HCT116 (cell line): ENCODE measurements at regions of chr5 and their contacts with region 1.

Region 1: DNA sequence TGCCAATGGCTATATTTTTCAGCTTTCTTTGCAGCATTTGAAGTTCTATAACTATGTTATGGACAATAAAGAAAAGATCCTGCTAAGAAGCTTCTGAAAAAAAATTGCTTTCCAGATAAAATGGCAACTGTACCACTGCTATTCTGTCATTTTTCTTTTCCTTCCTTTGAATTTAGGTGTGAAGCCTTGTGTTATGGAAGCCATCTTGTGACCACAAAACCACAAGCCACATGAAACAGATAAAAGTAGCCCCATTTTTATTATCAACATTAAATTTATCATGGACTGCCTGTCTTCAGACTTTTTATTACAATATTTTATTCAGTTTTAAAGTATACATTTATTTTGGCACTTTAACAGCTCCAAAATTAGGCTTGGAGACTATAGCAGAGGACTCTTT is 289.9 kb upstream of the ACTBL2 start:
- DNase-seq: no peak
- ATAC-seq: no peak
- H3K4me3 ChIP-seq: no peak overlapping the region
- H3K27ac ChIP-seq: no peak overlapping the region
- H3K4me1 ChIP-seq: no peaks in the 10 kb centered on the region
- H3K27me3 ChIP-seq: no peaks in the 10 kb centered on the region
- CTCF ChIP-seq: no peak
- POLR2A ChIP-seq: no peak
- RAD21 ChIP-seq: no peak

Region 2: DNA sequence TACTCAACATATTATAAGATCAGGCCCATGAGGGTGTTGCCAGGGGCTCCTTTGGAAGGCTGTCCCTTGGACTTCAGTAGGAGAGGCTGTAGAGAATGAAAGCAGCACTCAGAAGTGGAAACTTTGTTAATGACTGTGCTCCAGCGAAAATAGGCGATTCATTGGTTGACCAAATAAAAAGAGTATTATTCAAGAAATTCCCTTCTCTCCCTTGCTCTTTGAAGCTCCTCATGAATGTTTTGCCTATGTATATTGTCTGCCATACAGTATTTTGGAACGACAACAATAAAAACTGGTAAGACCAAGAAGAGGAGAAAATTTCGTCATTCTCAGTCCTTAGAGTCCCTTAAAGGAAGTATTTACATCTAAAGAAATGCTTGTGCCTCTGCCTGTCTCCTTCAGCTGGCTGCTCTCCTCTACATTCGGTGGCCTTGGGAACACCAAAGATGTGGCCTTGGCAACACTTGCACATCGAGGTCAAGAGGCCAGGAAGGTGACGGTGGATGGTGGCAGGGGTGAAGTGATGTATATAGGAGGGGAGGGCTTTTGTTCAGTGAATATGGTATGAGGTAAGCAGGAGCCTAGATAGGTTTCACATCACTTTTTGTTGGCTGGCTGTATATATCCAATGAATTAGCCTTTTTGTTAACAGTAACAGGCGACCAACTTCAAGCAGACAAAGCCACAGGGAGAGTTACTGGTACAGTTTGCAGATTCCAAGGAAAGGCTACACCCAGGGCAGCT is 194.9 kb before region 1 on chr5:
- CTCF ChIA-PET with region 1: no interaction called
- POLR2A ChIA-PET with region 1: no interaction called
- RAD21 ChIA-PET with region 1: no interaction called
- intact Hi-C with region 1: no loop called
- DNase-seq: no peak
- ATAC-seq: no peak
- H3K4me3 ChIP-seq: no peak overlapping the region
- H3K27ac ChIP-seq: no peak overlapping the region
- H3K4me1 ChIP-seq: no peaks in the 10 kb centered on the region
- H3K27me3 ChIP-seq: no peaks in the 10 kb centered on the region
- CTCF ChIP-seq: no peak
- POLR2A ChIP-seq: no peak
- RAD21 ChIP-seq: no peak

Region 3: GRCh38 chr5:57804007-57804444 is 31.5 kb after region 1 on chr5:
- CTCF ChIA-PET with region 1: no interaction called
- POLR2A ChIA-PET with region 1: no interaction called
- RAD21 ChIA-PET with region 1: no interaction called
- intact Hi-C with region 1: loop called (anchors 2 kb)
- DNase-seq: no peak
- ATAC-seq: no peak
- H3K4me3 ChIP-seq: no peak overlapping the region
- H3K27ac ChIP-seq: no peak overlapping the region
- H3K4me1 ChIP-seq: peaks cover 0 to 2% of the 10 kb centered on the region in 2 experiments; a peak in 1 of 4 replicates
- H3K27me3 ChIP-seq: no peaks in the 10 kb centered on the region
- CTCF ChIP-seq: no peak
- POLR2A ChIP-seq: no peak
- RAD21 ChIP-seq: no peak